Mammary epithelial cell (primary cell): ENCODE measurements at regions of chr6 and their contacts with region 1.

Region 1: GRCh38 chr6:2196079-2196679 is 49.2 kb downstream of the GMDS start:
- DNase-seq: peak; percentile 40
- H3K4me3 ChIP-seq: no peak overlapping the region
- H3K27ac ChIP-seq: no peak overlapping the region
- H3K4me1 ChIP-seq: peaks cover 12% of the 10 kb centered on the region
- H3K27me3 ChIP-seq: no peaks in the 10 kb centered on the region
- CTCF ChIP-seq: peak; percentile 74 to 84

Region 2: GRCh38 chr6:1348675-1349074 is 847.5 kb before region 1 on chr6:
- CTCF ChIA-PET with region 1: no interaction called
- dilution Hi-C with region 1: no loop called
- in situ Hi-C with region 1: no loop called
- intact Hi-C with region 1: no loop called
- DNase-seq: no peak
- H3K4me3 ChIP-seq: no peak overlapping the region
- H3K27ac ChIP-seq: no peak overlapping the region
- H3K4me1 ChIP-seq: no peaks in the 10 kb centered on the region
- H3K27me3 ChIP-seq: no peaks in the 10 kb centered on the region
- CTCF ChIP-seq: no peak

Region 3: DNA sequence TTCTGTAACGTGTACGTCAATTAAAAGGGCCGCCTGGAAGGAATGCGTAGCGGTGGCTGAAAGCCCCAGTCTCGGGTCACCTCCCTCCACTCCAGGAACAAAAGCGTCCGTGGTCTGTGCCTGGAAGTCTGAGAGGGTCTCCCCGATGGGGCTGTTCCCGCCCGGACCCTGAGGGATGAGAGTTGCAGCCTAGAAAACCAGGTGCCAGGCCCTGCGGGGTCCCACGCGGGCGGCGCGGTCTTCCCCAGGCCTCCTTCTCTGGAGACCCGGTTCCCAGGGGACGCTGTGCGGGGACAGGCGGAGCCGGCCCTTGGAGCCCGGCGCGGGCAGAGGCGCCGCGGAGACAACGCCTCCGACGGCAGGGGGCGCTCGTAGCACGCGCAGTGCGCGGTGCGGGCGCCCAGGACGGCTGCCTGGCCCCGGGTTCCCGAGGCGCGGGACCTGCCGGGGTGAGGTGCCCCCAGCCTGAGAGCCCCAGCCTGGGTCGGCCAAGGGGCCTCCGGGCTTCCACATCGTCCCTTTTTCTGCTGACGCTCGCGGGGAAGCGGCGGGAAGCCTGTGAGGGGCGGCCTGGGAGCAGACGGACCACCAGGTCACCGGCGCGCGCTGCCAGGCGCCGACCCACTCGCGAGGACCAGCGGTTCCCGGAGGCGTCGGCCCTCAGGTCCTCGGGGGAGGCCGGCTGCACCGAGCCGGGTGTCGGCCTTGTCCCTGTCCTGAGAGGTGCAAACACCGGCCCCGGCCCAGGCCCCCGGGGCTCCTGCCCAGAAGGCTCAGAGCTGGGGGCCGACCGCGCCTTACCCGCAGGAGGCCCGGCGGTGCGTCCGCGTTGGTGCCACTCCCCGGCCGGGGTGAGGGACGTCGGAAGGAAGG is 591.8 kb before region 1 on chr6:
- CTCF ChIA-PET with region 1: no interaction called
- dilution Hi-C with region 1: no loop called
- in situ Hi-C with region 1: loop called (anchors 10 kb)
- intact Hi-C with region 1: loop called (anchors 1 kb)
- DNase-seq: peak; percentile 48
- H3K4me3 ChIP-seq: peak overlapping the region; percentile 39 to 57 (median 54)
- H3K27ac ChIP-seq: no peak overlapping the region
- H3K4me1 ChIP-seq: peaks cover 16% of the 10 kb centered on the region
- H3K27me3 ChIP-seq: no peaks in the 10 kb centered on the region
- CTCF ChIP-seq: peak; percentile 62 to 80

Region 4: DNA sequence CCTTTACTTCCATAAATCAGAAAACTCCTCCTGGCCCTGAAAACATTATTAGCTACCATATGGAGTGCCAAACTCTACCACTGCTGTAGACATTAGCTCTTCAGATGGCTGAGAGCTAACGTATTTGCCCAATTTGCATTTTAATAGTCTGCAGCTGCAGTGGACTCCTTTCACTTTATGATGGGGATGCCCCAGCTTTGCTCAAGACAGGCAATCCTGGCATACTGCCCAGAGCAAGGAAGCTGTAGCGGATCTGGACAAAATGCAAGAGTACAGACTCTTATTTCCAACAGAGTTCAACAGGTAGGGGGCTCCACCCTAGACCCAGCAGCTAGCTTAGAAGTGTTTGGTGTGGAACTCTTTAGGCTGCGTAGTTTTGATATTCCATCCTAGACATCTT is 339.8 kb before region 1 on chr6:
- CTCF ChIA-PET with region 1: no interaction called
- dilution Hi-C with region 1: no loop called
- in situ Hi-C with region 1: no loop called
- intact Hi-C with region 1: loop called (anchors 10 kb)
- DNase-seq: peak; percentile 61
- H3K4me3 ChIP-seq: no peak overlapping the region
- H3K27ac ChIP-seq: no peak overlapping the region
- H3K4me1 ChIP-seq: peaks cover 6% of the 10 kb centered on the region
- H3K27me3 ChIP-seq: no peaks in the 10 kb centered on the region
- CTCF ChIP-seq: peak in 1 of 2 donors; percentile 3

Region 5: GRCh38 chr6:2695454-2696095 is 499.4 kb after region 1 on chr6:
- CTCF ChIA-PET with region 1: no interaction called
- dilution Hi-C with region 1: no loop called
- in situ Hi-C with region 1: no loop called
- intact Hi-C with region 1: loop called (anchors 5 kb)
- DNase-seq: peak; percentile 38
- H3K4me3 ChIP-seq: no peak overlapping the region
- H3K27ac ChIP-seq: no peak overlapping the region
- H3K4me1 ChIP-seq: no peaks in the 10 kb centered on the region
- H3K27me3 ChIP-seq: no peaks in the 10 kb centered on the region
- CTCF ChIP-seq: peak; percentile 17 to 50